ENCODE measurements at regions of chr2 and their contacts with region 1.

Region 1: DNA sequence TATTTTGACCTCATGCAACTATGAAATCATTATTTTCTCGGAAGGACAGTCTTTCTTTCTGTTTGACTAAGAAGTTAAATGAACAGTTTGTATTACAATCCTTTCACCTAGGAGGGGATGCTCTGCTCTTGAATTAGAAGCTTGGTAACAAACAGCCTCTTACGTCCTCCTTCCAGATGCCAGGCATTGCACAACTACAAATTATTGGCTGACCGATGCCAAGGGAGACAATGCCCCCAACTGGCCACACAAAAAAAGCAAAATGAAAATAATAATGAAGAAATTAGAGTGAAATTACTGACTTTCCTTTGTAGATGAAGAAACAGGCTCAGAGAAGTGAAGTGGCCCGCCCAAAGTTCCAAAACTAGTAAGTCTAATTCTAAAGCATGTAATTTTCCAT is 177.9 kb downstream of the CYRIA start:
- H3K4me3 ChIP-seq: no peak overlapping the region
- H3K27ac ChIP-seq: no peak overlapping the region
- H3K4me1 ChIP-seq: no peaks in the 10 kb centered on the region
- CTCF ChIP-seq: no peak

Region 2: DNA sequence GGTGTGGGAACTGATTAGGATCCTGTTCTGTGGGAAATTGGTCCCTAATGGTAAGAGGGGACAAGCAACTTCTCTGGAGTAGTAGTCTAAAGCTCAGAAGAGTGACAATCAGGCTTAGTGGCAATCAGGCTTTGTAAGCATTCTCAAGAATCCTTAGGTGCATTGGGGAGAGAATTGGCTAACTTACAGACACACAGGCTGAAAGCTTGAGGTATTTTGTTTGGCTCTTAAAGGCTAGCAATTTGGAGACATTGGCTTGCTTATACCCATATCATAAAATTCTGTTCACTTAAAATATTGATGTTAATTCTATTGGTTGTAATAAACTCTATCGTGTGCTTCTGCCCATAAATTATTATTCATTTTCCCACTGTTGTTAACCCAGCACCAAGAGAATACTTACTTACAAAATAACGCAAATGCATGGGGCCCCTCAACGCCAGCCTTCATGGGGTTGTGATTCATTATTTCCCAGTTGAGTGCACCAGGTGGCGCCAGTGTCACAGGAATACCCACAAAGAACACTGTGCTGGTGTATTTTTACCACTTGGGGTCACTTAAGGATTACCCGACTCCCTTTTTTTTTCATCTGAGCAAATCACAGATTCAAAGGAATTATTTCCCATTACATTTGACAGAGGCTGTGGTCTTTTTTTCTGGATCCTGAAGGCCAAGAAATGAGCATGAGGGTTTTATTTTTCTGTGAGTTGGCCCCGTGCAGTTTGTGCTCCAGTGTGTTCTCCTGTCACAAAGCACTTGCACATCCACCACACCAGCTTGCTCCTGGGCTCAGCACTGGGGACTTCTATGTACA is 850.5 kb before region 1 on chr2:
- CTCF ChIA-PET with region 1: interaction called, 10 read pairs
- POLR2A ChIA-PET with region 1: no interaction called
- H3K4me3 ChIP-seq: no peak overlapping the region
- H3K27ac ChIP-seq: no peak overlapping the region
- H3K4me1 ChIP-seq: no peaks in the 10 kb centered on the region
- CTCF ChIP-seq: peak; percentile 83

Region 3: DNA sequence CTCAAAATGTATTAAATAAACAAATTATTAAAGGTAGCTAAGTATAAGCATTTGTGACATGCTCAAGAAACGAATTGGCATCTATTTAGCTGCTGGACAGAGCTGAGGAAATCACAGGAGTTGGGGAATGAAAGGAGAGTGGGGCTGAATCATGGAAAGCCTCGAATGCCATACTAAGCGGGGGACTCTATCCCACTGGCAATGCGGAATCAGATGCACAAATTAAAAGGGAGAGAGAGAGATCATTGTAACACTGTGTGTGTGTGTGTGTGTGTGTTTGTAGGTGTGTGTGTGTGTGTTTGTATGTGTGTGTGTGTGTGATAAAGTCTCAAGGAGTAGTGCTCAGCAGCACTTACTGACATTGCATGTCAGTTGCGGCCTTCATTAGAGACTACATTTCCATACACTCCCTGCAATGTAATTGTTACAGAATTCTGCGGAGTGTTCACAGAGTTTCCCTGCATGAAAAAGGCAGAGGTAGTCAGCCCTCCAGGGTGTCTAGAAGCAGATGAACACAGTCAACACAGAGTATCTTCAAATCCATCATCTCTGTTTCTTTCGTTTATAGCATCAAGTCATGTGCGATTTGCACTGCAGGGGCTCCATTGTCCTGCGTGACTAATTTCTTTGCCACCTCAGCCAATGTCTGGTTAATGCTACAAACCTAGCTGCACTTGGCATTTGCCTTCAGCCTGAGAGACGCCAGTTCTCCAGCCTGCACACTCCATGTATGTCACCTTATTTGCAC is 289.6 kb after region 1 on chr2:
- CTCF ChIA-PET with region 1: no interaction called
- POLR2A ChIA-PET with region 1: no interaction called
- H3K4me3 ChIP-seq: no peak overlapping the region
- H3K27ac ChIP-seq: no peak overlapping the region
- H3K4me1 ChIP-seq: no peaks in the 10 kb centered on the region
- CTCF ChIP-seq: no peak